Posterior cingulate gyrus (tissue), 11 donors: ENCODE measurements at regions of chr6 and their contacts with region 1.

Region 1: DNA sequence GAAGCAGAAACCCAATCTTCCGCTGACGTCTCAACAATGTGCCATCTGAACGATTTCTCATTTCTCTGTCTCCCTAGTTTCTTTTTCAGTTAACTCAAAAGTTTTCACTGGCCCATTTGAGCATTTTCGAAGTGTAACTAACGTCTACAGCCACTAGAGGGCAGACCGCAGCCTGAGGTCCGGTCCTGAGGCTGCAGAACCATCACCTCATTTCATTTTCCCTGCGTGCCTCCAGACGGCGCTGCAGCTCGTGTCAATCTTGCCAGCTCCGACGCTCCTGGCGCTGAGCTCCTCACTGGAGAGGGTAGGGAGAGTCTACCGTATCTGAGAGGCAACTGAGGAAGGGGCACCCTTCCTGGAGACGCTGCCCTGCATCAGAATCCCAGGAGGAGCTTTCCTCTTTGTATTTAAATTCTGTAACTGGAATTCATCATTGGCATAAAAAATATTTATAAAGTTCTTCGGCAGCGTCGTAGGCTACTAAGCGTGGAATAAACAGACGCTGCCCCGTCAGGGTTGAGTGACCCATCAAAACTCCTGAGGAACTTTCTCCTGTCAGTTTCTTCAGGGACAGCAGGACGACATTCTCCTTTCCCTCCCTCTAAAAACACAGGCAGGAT is 28.5 kb upstream of the DTNBP1 start:
- DNase-seq: peak; percentile 68 to 97 (median 83)

Region 2: DNA sequence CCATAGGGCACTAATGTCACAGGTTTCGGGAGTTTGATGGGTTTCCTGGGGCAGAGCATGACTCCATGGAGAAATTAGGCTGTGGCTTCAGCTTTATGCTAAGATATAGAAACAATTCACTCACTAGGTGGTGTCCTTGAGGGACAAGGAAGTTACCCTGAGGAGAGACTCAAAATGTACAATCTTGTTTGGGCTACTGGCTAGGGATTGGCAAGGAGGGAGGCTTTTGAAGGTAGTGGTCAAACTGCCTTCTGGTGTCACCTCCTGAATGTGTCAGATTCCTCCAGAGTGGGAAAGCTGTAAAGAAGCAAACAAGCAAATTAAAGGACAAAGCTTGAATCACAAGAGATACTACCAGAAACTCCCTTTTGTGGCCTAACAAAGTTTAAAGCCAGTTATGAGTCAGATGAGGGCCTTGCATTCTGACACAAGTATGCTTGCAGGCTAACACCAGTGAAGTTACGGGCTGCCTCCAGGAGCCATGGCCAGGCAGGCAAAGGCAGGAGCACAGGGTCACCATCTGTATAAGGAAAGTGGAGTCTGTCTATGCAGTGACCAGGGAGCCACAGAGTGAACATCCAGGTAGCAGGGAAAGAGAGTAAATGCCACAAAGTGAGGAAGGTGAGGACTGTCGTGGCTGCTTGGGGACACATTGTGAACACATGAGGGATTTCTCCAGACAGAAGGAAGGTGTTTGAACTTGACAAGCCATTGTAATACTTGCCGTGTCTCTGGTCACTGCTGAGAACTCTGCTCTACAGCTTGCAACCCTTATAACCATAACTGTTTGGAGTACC is 79.2 kb after region 1 on chr6:
- intact Hi-C with region 1: no loop called
- DNase-seq: no peak

Region 3: GRCh38 chr6:16128759-16129622 is 437.6 kb after region 1 on chr6 and contains the start of gene MYLIP:
- intact Hi-C with region 1: loop called (anchors 1 kb)
- DNase-seq: peak; percentile 98 to 100 (median 98)

Region 4: GRCh38 chr6:16183187-16183664 is 491.9 kb after region 1 on chr6:
- intact Hi-C with region 1: loop called (anchors 1 kb)
- DNase-seq: no peak

Region 5: DNA sequence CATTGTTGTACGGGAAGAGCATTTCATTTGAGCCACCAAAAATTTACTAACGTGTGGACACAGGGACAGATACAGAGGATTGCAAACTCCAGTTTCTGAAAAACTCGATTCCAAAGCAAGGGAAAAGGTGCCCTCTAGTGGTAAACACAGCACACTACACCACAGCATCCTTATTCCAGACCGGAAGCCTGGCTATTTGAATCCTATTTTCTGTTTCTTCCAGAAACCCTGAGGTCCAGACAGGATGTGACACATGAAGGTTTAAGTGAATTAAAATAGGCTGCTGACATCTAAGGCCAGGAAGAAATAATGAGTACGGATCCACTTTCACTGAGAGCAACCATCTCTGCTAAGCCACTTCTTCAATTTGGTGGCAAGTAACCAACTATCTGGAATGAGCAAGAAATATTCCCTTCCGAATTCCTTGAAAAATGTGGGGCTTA is 515.3 kb after region 1 on chr6:
- intact Hi-C with region 1: loop called (anchors 1 kb)
- DNase-seq: peak in 4 of 10 donors; percentile 50 to 68 (median 61)